Right cardiac atrium (tissue), 5 donors: ENCODE measurements at regions of chr12 and their contacts with region 1.

Region 1: GRCh38 chr12:64256166-64256800 is 34.2 kb upstream of the KICS2 start:
- DNase-seq: no peak
- ATAC-seq: peak in 1 of 2 donors; percentile 38
- H3K4me3 ChIP-seq: no peak overlapping the region
- H3K27ac ChIP-seq: no peak overlapping the region
- H3K4me1 ChIP-seq: no peaks in the 10 kb centered on the region
- H3K27me3 ChIP-seq: no peaks in the 10 kb centered on the region

Region 2: DNA sequence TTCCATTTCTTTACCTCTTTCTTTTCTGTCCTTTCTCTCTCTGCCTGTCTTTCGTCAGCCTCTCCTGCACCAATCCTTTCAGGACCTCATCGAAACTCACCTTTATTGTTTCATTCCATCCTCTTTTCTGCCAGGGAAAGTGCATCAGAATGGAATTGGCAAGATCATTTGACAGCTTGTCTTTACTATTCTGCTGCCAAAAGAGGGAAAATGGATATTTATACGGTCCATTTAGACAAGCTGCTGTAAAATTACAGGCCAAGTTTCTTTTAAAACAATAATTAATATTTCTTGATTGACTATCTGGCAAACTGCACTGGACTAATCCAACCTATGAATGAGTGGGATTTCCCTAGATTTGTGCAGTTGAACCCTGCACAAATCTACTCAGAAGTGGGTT is 419.3 kb before region 1 on chr12:
- intact Hi-C with region 1: loop called (anchors 2 to 5 kb)
- DNase-seq: no peak
- ATAC-seq: no peak
- H3K4me3 ChIP-seq: no peak overlapping the region
- H3K27ac ChIP-seq: no peak overlapping the region
- H3K4me1 ChIP-seq: no peaks in the 10 kb centered on the region
- H3K27me3 ChIP-seq: no peaks in the 10 kb centered on the region